B cell (primary cell): ENCODE measurements at regions of chr1 and their contacts with region 1.

Region 1: DNA sequence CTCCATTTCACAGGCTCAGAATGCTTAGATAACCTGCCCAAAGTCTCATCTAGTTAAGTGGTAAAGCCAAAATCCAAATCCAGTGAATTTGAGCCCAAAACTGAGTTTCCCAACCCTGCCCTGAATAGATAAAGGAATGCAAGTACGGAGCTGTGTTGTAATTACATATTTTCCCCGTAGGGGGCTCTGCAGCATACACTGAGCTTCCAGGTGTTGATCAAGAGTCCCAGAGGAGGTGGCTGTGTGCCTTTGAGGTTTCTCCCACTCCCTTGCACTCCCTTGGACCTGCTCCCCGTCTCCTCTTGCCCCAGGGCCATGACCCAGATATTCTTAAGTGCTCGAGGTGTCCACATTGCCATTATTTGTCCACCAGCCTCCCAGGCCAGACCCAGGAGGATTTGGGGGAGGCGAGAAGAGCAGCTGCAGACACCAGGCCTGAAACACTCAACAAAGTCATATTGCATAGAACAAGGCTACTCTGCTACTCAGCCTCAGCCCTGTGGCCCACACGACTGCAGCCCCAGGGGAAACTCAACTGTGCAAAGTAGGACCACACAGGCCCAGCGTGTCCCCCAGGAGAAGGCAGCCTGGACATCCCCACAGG is 18.4 kb upstream of the LY9 start:
- DNase-seq: peak; percentile 72
- ATAC-seq: no peak
- H3K4me3 ChIP-seq: no peak overlapping the region
- H3K4me3 Mint-ChIP-seq: no peak overlapping the region
- H3K27ac ChIP-seq: no peak overlapping the region
- H3K27ac Mint-ChIP-seq: peak overlapping the region; percentile 76
- H3K4me1 ChIP-seq: peaks cover 45 to 58% of the 10 kb centered on the region in 2 donors
- H3K4me1 Mint-ChIP-seq: peaks cover 83% of the 10 kb centered on the region
- H3K27me3 ChIP-seq: no peaks in the 10 kb centered on the region
- H3K27me3 Mint-ChIP-seq: no peaks in the 10 kb centered on the region
- CTCF ChIP-seq: peak; percentile 72

Region 2: GRCh38 chr1:160614410-160614809 is 163.2 kb before region 1 on chr1:
- CTCF ChIA-PET with region 1: no interaction called
- POLR2A ChIA-PET with region 1: no interaction called
- intact Hi-C with region 1: no loop called
- DNase-seq: no peak
- ATAC-seq: no peak
- H3K4me3 ChIP-seq: no peak overlapping the region
- H3K4me3 Mint-ChIP-seq: no peak overlapping the region
- H3K27ac ChIP-seq: no peak overlapping the region
- H3K27ac Mint-ChIP-seq: no peak overlapping the region
- H3K4me1 ChIP-seq: peaks cover 4 to 11% of the 10 kb centered on the region in 2 donors
- H3K4me1 Mint-ChIP-seq: peaks cover 23% of the 10 kb centered on the region
- H3K27me3 ChIP-seq: no peaks in the 10 kb centered on the region
- H3K27me3 Mint-ChIP-seq: no peaks in the 10 kb centered on the region
- CTCF ChIP-seq: no peak

Region 3: DNA sequence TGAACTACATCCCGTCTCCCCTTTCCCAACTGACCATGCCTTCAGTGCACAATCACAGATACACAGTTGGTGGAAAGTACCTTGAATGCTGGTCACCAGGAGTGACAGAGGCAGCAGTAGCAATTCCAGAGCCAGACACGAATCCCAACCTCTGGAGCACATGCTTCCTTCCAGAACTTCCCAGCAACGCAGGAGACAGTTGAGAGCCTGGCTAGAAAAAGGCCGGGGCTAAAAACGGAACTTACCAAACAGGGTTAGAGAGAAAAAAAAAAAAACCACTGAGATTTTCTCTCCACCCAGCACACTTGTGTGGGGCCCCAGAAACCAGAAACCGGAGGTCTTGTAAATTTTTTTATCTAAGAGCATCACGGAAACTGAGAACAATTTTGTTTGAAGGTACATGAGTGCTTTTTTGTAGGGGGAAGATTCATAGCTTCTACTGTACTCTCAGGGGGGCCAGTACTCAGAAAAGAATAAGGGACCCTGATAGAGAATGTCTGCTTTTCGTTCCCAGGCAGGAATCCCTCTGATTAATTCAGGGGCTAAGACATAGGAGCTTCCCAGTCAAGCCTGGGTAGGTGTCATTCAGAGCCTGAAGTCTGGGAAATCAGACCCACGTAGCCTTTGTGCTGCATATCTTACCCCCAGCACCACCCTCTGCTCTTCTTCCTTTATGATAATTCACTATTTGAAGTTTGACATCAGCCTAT is 65.8 kb before region 1 on chr1 and contains the start of gene CD48:
- CTCF ChIA-PET with region 1: interaction called, 10 read pairs
- POLR2A ChIA-PET with region 1: interaction called, 4 read pairs
- intact Hi-C with region 1: no loop called
- DNase-seq: peak; percentile 80
- ATAC-seq: peak; percentile 54
- H3K4me3 ChIP-seq: peak within 1 kb of the TSS; percentile 87 to 100 (median 98)
- H3K4me3 Mint-ChIP-seq: no peak within 1 kb of the TSS
- H3K27ac ChIP-seq: peak within 1 kb of the TSS; percentile 89 to 95
- H3K27ac Mint-ChIP-seq: no peak within 1 kb of the TSS
- H3K4me1 ChIP-seq: peaks cover 62 to 64% of the 10 kb centered on the region in 2 donors
- H3K4me1 Mint-ChIP-seq: peaks cover 26% of the 10 kb centered on the region
- H3K27me3 ChIP-seq: no peaks in the 10 kb centered on the region
- H3K27me3 Mint-ChIP-seq: no peaks in the 10 kb centered on the region
- CTCF ChIP-seq: no peak
- total RNA-seq, gene CD48: 252 and 255 TPM in 2 replicates

Region 4: GRCh38 chr1:160748181-160748877 is 29.3 kb before region 1 on chr1:
- CTCF ChIA-PET with region 1: interaction called, 10 read pairs
- POLR2A ChIA-PET with region 1: interaction called, 3 read pairs
- intact Hi-C with region 1: no loop called
- DNase-seq: no peak
- ATAC-seq: no peak
- H3K4me3 ChIP-seq: no peak overlapping the region
- H3K4me3 Mint-ChIP-seq: no peak overlapping the region
- H3K27ac ChIP-seq: no peak overlapping the region
- H3K27ac Mint-ChIP-seq: no peak overlapping the region
- H3K4me1 ChIP-seq: peaks cover 8 to 11% of the 10 kb centered on the region in 2 donors
- H3K4me1 Mint-ChIP-seq: peaks cover 30% of the 10 kb centered on the region
- H3K27me3 ChIP-seq: no peaks in the 10 kb centered on the region
- H3K27me3 Mint-ChIP-seq: no peaks in the 10 kb centered on the region
- CTCF ChIP-seq: peak; percentile 30

Region 5: GRCh38 chr1:160795951-160796383 is 18.4 kb after region 1 on chr1 and contains the start of gene LY9:
- CTCF ChIA-PET with region 1: interaction called, 150 read pairs
- POLR2A ChIA-PET with region 1: interaction called, 13 read pairs
- intact Hi-C with region 1: loop called (anchors 1 kb)
- DNase-seq: peak; percentile 96
- ATAC-seq: peak; percentile 93
- H3K4me3 ChIP-seq: peak within 1 kb of the TSS; percentile 41 to 87 (median 63)
- H3K4me3 Mint-ChIP-seq: peak within 1 kb of the TSS; percentile 99
- H3K27ac ChIP-seq: peak within 1 kb of the TSS; percentile 95 to 98
- H3K27ac Mint-ChIP-seq: peak within 1 kb of the TSS; percentile 98
- H3K4me1 ChIP-seq: peaks cover 62 to 68% of the 10 kb centered on the region in 2 donors
- H3K4me1 Mint-ChIP-seq: peaks cover 68% of the 10 kb centered on the region
- H3K27me3 ChIP-seq: no peaks in the 10 kb centered on the region
- H3K27me3 Mint-ChIP-seq: no peaks in the 10 kb centered on the region
- CTCF ChIP-seq: no peak
- total RNA-seq, gene LY9: 365 and 367 TPM in 2 replicates

Region 6: GRCh38 chr1:160813215-160813614 is 35.6 kb after region 1 on chr1:
- CTCF ChIA-PET with region 1: interaction called, 5 read pairs
- POLR2A ChIA-PET with region 1: no interaction called
- intact Hi-C with region 1: loop called (anchors 5 kb)
- DNase-seq: peak; percentile 27
- ATAC-seq: no peak
- H3K4me3 ChIP-seq: no peak overlapping the region
- H3K4me3 Mint-ChIP-seq: no peak overlapping the region
- H3K27ac ChIP-seq: no peak overlapping the region
- H3K27ac Mint-ChIP-seq: no peak overlapping the region
- H3K4me1 ChIP-seq: no peaks in the 10 kb centered on the region
- H3K4me1 Mint-ChIP-seq: peaks cover 33% of the 10 kb centered on the region
- H3K27me3 ChIP-seq: no peaks in the 10 kb centered on the region
- H3K27me3 Mint-ChIP-seq: no peaks in the 10 kb centered on the region
- CTCF ChIP-seq: no peak

Region 7: GRCh38 chr1:160830321-160831153 is 52.9 kb after region 1 on chr1:
- CTCF ChIA-PET with region 1: interaction called, 64 read pairs
- POLR2A ChIA-PET with region 1: interaction called, 3 read pairs
- intact Hi-C with region 1: loop called (anchors 1 kb)
- DNase-seq: peak; percentile 84
- ATAC-seq: peak; percentile 74
- H3K4me3 ChIP-seq: no peak overlapping the region
- H3K4me3 Mint-ChIP-seq: no peak overlapping the region
- H3K27ac ChIP-seq: peak overlapping the region in 1 of 2 donors; percentile 14
- H3K27ac Mint-ChIP-seq: peak overlapping the region; percentile 77
- H3K4me1 ChIP-seq: no peaks in the 10 kb centered on the region
- H3K4me1 Mint-ChIP-seq: peaks cover 10% of the 10 kb centered on the region
- H3K27me3 ChIP-seq: no peaks in the 10 kb centered on the region
- H3K27me3 Mint-ChIP-seq: no peaks in the 10 kb centered on the region
- CTCF ChIP-seq: peak; percentile 83

Region 8: DNA sequence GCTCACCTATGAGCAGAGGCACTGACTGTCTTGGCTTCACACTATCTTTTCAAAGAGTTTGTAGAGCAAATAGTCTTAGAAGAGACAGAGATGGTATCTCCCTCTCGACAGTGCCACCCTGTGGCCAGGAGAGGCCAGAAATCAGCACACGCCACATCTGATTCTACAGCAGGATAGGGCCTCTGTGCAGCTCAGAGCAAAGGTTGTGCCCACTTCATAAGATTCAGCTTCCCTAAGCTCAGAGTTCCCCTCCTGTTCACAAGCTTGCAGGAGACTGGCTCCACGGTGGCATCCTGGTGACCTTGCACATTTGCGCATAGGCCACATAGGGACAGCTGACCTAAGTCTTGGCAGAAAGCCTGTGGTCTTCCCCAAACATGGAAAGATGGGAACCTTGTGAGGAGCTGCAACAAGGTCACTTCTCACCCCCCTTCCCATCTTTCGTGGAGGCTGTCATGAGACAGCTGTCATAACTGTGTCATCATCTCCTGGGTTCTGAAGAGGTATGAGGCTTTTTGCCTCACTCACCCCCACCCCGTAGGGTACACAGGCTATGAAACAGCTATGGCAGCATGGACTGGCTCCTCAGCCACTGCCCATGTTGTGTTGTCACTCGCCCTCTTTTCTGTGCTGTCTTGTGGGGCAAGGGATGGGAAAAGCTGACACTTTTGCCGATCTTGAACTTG is 174.0 kb after region 1 on chr1:
- CTCF ChIA-PET with region 1: interaction called, 104 read pairs
- POLR2A ChIA-PET with region 1: no interaction called
- intact Hi-C with region 1: no loop called
- DNase-seq: peak; percentile 81
- ATAC-seq: peak; percentile 81
- H3K4me3 ChIP-seq: no peak overlapping the region
- H3K4me3 Mint-ChIP-seq: no peak overlapping the region
- H3K27ac ChIP-seq: no peak overlapping the region
- H3K27ac Mint-ChIP-seq: no peak overlapping the region
- H3K4me1 ChIP-seq: peaks cover 0 to 4% of the 10 kb centered on the region in 2 donors
- H3K4me1 Mint-ChIP-seq: peaks cover 9% of the 10 kb centered on the region
- H3K27me3 ChIP-seq: no peaks in the 10 kb centered on the region
- H3K27me3 Mint-ChIP-seq: no peaks in the 10 kb centered on the region
- CTCF ChIP-seq: peak; percentile 85

Region 9: DNA sequence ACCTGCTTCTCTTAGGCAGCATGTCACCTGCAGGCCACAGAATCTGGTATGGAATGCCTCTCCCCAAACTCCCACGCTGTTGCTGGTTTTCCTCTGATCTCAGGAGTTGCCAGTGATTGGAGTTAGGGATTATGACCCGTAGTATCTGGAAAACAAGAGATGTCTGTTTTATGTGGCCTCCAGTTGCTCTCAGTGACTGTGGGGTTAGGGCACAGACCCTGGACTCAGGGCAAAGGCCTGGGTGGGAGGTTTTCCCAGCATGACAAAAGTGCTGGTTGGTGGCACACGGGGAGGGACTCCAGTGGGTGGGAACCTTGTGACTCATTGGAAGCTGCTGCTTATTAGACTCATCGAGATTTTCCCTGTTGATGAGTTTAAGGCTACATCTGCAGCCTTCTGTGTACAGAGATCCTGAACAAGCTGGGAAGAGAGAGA is 460.5 kb after region 1 on chr1 and contains the start of gene NR1I3:
- CTCF ChIA-PET with region 1: no interaction called
- POLR2A ChIA-PET with region 1: no interaction called
- intact Hi-C with region 1: no loop called
- DNase-seq: no peak
- ATAC-seq: no peak
- H3K4me3 ChIP-seq: no peak within 1 kb of the TSS
- H3K4me3 Mint-ChIP-seq: no peak within 1 kb of the TSS
- H3K27ac ChIP-seq: no peak within 1 kb of the TSS
- H3K27ac Mint-ChIP-seq: no peak within 1 kb of the TSS
- H3K4me1 ChIP-seq: no peaks in the 10 kb centered on the region
- H3K4me1 Mint-ChIP-seq: peaks cover 2% of the 10 kb centered on the region
- H3K27me3 ChIP-seq: peaks cover 0 to 15% (median 0%) of the 10 kb centered on the region in 4 experiments
- H3K27me3 Mint-ChIP-seq: peaks cover 28% of the 10 kb centered on the region
- CTCF ChIP-seq: no peak
- total RNA-seq, gene NR1I3: not detected in 2 replicates

Region 10: GRCh38 chr1:162019006-162019405 is 1241.4 kb after region 1 on chr1:
- CTCF ChIA-PET with region 1: no interaction called
- POLR2A ChIA-PET with region 1: no interaction called
- intact Hi-C with region 1: no loop called
- DNase-seq: no peak
- ATAC-seq: no peak
- H3K4me3 ChIP-seq: no peak overlapping the region
- H3K4me3 Mint-ChIP-seq: no peak overlapping the region
- H3K27ac ChIP-seq: no peak overlapping the region
- H3K27ac Mint-ChIP-seq: no peak overlapping the region
- H3K4me1 ChIP-seq: peaks cover 3 to 9% of the 10 kb centered on the region in 2 donors
- H3K4me1 Mint-ChIP-seq: peaks cover 10% of the 10 kb centered on the region
- H3K27me3 ChIP-seq: peaks cover 0 to 14% (median 4%) of the 10 kb centered on the region in 4 experiments
- H3K27me3 Mint-ChIP-seq: peaks cover 50% of the 10 kb centered on the region
- CTCF ChIP-seq: no peak